Prostate gland (tissue), 2 donors: ENCODE measurements at regions of chr2 and their contacts with region 1.

Region 1: DNA sequence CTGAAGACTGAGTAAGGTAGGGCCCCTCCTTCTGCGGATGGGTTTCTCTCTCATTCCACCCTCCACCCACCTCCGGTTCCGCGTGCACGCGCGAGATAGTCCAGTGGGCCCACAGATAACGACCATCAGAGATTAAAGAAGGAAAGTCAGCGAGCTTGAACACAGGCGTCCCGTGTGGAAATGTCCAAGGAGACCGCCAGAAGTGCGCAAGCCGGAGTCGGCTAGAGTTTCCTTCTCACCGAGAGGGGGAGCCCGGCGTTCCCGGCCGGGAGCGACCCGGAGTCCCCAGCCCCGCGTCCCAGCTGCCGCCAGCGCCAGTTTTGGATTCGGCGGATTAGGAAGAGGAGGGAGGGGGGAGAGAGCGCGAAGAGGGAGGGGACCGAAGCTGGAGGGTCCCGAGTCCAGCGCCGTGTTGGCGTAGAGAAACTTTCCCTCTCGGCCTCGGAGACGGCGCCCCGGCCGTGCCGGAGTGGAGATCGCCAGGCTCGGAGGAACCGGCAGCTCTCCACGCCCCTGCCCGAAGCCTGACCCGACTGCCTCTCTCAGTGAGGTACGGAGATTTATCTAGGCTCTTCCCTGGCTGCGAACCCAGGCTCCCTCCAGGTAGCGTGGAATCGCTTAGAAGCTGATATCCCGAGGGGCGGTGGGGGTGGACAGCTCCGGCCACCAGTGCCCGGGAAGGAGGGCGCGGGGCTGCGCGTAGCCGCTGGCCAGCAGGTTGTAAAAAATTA is at the start of gene GULP1:
- DNase-seq: peak; percentile 70
- H3K4me3 ChIP-seq: peak within 1 kb of the TSS; percentile 74 to 82
- H3K27ac ChIP-seq: peak within 1 kb of the TSS; percentile 98 to 99
- H3K4me1 ChIP-seq: peaks cover 6% of the 10 kb centered on the region
- H3K27me3 ChIP-seq: no peaks in the 10 kb centered on the region
- CTCF ChIP-seq: peak; percentile 28 to 73 (median 57)
- POLR2A ChIP-seq: peak; percentile 19
- total RNA-seq, gene GULP1: 29.3 to 45.4 TPM

Region 2: DNA sequence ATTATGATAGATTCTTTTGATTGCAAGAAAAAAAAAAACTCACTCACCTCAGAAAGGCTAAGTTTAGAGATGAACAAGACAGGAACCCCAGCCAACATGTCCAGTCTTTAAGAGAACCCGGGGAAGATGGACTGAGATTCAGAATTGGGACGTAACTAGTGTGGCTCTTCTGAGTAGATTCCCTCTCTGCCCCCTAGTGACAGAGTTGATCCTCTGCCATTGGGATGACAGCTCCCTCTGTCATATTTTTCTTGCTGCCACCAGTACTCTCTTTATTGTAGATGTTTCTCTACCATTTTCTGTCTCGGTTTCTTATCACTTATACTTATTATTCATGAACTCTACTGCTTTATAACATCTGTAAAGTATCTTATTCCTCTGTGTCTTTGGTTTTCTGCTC is 77.6 kb after region 1 on chr2:
- intact Hi-C with region 1: loop called (anchors 5 kb)
- DNase-seq: peak; percentile 35
- H3K4me3 ChIP-seq: no peak overlapping the region
- H3K27ac ChIP-seq: no peak overlapping the region
- H3K4me1 ChIP-seq: no peaks in the 10 kb centered on the region
- H3K27me3 ChIP-seq: no peaks in the 10 kb centered on the region
- CTCF ChIP-seq: peak; percentile 21 to 55 (median 49)
- POLR2A ChIP-seq: no peak

Region 3: GRCh38 chr2:188506843-188507242 is 215.1 kb after region 1 on chr2:
- intact Hi-C with region 1: loop called (anchors 10 kb)
- DNase-seq: no peak
- H3K4me3 ChIP-seq: no peak overlapping the region
- H3K27ac ChIP-seq: no peak overlapping the region
- H3K4me1 ChIP-seq: no peaks in the 10 kb centered on the region
- H3K27me3 ChIP-seq: no peaks in the 10 kb centered on the region
- CTCF ChIP-seq: no peak
- POLR2A ChIP-seq: no peak

Region 4: DNA sequence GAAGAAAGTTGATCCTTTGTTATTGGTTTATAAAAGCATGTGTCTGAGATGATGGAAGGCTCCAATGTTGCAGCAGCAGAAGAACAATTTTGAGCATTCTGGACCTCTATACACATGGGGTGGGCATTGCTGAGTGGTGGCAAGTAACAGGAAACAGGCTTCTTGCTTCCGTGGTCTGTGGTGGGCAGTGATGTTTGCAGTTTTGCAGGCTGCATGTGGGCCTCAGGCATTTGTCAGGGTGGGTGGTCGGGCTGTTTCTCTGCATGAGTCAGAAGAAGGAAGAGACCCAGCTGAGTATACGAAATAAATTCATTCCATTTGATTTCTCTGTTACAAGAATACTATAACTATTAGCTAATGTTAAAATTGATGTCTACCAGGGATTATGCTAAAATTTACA is 442.9 kb after region 1 on chr2:
- intact Hi-C with region 1: no loop called
- DNase-seq: no peak
- H3K4me3 ChIP-seq: no peak overlapping the region
- H3K27ac ChIP-seq: no peak overlapping the region
- H3K4me1 ChIP-seq: no peaks in the 10 kb centered on the region
- H3K27me3 ChIP-seq: no peaks in the 10 kb centered on the region
- CTCF ChIP-seq: no peak
- POLR2A ChIP-seq: no peak